Activated B cell treated with CpG ODN at 0.5 μM for 24 hours (primary cell): ENCODE measurements at regions of chr10 and their contacts with region 1.

Region 1: GRCh38 chr10:4813023-4813422 is 13.0 kb upstream of the AKR1E2 start:
- DNase-seq: no peak
- ATAC-seq: no peak
- H3K4me3 Mint-ChIP-seq: no peak overlapping the region
- H3K27ac Mint-ChIP-seq: no peak overlapping the region
- H3K4me1 Mint-ChIP-seq: peaks cover 3% of the 10 kb centered on the region
- H3K27me3 Mint-ChIP-seq: peaks cover 2% of the 10 kb centered on the region
- CTCF ChIP-seq: no peak

Region 2: DNA sequence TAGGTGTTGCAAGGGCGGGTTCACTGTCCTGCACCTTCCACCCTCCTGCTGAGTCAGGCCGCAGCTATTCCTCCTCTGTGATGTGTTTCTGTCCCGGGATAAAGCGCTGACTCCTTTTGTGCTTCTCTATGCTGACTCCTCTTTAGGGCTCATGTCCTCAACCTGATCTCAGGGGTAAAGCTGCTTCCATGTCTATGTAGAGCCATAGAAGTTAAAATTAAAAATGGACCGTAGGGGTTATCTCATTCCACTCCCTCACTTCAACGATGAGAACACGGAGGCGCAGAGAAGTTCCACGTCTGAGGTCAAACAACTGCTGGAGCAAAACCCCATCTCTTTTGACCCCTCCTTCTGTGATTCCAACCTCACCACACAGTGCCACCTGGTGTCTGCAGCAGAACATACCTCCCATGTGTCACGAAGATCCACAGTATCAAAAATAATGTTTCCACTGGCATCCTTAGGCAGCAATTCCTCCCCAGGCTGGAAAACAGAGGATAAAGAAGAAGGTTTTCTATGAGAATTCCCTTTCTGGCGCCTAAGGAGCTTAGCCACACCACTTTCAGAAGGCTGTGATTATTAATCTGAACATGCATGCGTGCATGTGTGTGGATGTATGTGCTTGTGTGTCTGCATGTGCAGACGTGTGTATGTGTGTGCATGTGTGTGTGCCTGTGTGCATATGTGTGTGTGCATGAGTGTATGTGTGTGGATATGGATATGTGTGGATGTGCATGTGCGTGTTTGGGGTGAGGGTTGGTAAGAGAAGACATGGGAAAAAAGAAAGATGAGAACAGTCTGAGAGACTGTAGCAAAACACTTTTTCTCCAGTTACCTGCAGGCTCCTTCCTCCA is 470.5 kb after region 1 on chr10:
- CTCF ChIA-PET with region 1: interaction called, 5 read pairs
- POLR2A ChIA-PET with region 1: no interaction called
- intact Hi-C with region 1: loop called (anchors 1 kb)
- DNase-seq: no peak
- ATAC-seq: no peak
- H3K4me3 Mint-ChIP-seq: no peak overlapping the region
- H3K27ac Mint-ChIP-seq: no peak overlapping the region
- H3K4me1 Mint-ChIP-seq: no peaks in the 10 kb centered on the region
- H3K27me3 Mint-ChIP-seq: peaks cover 10% of the 10 kb centered on the region
- CTCF ChIP-seq: no peak

Region 3: GRCh38 chr10:5385224-5385623 is 572.2 kb after region 1 on chr10:
- CTCF ChIA-PET with region 1: interaction called, 3 read pairs
- POLR2A ChIA-PET with region 1: no interaction called
- intact Hi-C with region 1: loop called (anchors 2 kb)
- DNase-seq: no peak
- ATAC-seq: no peak
- H3K4me3 Mint-ChIP-seq: no peak overlapping the region
- H3K27ac Mint-ChIP-seq: no peak overlapping the region
- H3K4me1 Mint-ChIP-seq: no peaks in the 10 kb centered on the region
- H3K27me3 Mint-ChIP-seq: no peaks in the 10 kb centered on the region
- CTCF ChIP-seq: no peak

Region 4: DNA sequence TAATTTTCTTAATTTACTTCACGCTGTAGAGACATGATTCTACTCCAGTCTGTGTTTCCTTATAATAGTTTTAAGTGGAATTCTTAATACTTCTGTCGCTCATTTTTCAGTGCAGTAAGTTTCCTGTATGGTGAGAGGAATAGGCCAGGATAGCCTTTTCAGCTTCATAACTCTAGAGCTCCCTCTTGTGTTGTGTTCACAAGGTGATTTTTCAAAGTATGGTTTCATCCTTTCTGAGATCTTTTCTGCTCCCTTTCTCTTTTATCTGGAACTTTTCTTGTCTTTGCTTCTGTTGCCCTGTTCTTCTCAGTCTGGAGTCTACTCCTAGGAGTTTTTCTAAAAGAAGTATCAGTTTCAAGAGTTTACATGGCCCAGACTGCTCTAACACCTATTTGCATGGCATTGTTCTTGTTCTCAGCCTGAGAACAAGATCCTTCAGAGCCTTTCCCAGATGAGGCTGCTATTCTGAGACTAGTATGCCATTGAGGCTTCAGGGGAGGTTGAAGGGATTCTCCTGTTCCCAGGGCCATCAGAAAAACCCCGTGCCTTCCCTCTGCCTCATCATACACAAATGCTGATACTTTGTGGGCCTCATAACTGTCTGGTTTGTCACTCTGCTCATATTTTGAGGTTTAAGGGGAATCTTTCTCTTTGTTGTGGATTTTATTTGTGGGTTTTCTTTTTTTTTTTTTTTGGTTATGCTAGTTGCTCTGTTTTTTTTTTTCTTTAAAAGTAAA is 621.2 kb after region 1 on chr10:
- CTCF ChIA-PET with region 1: interaction called, 6 read pairs
- POLR2A ChIA-PET with region 1: no interaction called
- intact Hi-C with region 1: loop called (anchors 1 kb)
- DNase-seq: no peak
- ATAC-seq: no peak
- H3K4me3 Mint-ChIP-seq: no peak overlapping the region
- H3K27ac Mint-ChIP-seq: no peak overlapping the region
- H3K4me1 Mint-ChIP-seq: no peaks in the 10 kb centered on the region
- H3K27me3 Mint-ChIP-seq: no peaks in the 10 kb centered on the region
- CTCF ChIP-seq: no peak

Region 5: DNA sequence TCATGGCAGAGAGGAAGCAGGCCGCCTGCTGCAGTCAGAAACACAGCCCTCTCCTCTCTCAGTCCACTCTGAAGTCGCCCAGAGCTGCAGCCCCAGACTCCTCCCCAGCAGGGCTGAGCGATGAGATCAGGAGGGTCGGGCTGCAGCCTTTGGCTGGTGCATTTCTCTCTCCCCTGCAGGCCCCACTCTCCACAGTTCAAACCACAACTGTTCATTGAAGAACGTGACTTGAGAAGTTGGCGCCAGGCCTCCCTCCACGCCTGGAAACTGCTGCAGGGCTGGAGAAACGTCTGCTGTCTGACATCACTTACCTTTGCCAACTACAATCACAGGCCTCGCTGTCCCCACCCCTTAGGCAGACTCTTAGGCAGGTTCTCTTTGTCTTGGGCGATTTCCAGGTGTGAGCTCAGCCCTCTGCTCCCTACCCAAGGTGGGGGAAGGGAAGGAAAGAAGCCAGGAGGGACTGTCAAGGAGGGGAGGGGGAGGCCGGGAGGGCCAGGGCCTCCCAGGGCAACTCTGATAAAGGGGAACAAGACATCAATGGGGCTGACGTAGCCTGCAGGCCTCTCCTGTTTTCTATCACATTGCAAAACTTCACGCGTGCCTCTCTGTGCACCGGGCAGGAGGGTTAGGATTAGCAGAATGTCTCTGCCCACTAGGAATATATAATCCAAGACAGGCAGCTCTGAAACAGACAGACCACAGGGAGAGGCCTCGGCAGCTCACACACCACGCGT is 653.6 kb after region 1 on chr10:
- CTCF ChIA-PET with region 1: no interaction called
- POLR2A ChIA-PET with region 1: no interaction called
- intact Hi-C with region 1: no loop called
- DNase-seq: no peak
- ATAC-seq: no peak
- H3K4me3 Mint-ChIP-seq: no peak overlapping the region
- H3K27ac Mint-ChIP-seq: no peak overlapping the region
- H3K4me1 Mint-ChIP-seq: peaks cover 10% of the 10 kb centered on the region
- H3K27me3 Mint-ChIP-seq: no peaks in the 10 kb centered on the region
- CTCF ChIP-seq: no peak

Region 6: DNA sequence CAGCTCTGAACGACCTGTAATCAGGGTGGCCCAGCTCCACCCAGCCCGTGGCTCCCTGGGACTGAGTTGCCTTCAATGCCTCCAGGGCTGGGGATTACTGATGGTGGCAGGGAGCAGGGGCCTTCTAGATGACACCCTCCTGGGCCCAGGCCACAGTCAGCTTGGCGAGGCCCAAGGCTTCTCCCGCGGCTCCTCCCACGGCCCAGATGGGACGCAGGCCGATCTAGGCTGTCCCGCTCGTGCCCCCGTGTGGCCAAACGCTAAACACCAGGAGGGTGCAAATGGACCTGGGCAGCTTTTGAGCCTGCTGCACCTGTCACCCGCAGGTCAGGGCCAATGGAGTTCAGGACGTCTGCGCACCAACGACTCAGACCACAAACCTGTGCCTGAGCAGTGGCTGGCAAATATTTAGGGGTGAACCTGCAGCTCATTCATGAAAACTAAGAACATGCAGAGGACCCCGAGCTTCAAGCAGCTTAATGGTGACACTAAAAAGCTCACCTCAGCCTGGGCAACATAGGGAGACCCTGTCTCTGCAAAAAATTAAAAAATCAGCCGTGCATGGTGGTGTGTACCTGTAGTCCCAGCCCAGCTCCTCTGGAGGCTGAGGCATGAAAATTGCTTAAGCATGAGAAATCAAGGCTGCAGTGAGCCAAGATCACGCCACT is 810.2 kb after region 1 on chr10:
- CTCF ChIA-PET with region 1: interaction called, 5 read pairs
- POLR2A ChIA-PET with region 1: no interaction called
- intact Hi-C with region 1: loop called (anchors 1 kb)
- DNase-seq: peak; percentile 75
- ATAC-seq: peak; percentile 99
- H3K4me3 Mint-ChIP-seq: no peak overlapping the region
- H3K27ac Mint-ChIP-seq: no peak overlapping the region
- H3K4me1 Mint-ChIP-seq: peaks cover 4% of the 10 kb centered on the region
- H3K27me3 Mint-ChIP-seq: no peaks in the 10 kb centered on the region
- CTCF ChIP-seq: no peak